ENCODE measurements at regions of chr6 and their contacts with region 1.

Region 1: GRCh38 chr6:2921520-2922115 is 18.5 kb upstream of the SERPINB9 start:
- DNase-seq: no peak
- ATAC-seq: no peak
- H3K4me3 ChIP-seq: no peak overlapping the region
- H3K27ac ChIP-seq: no peak overlapping the region
- H3K4me1 ChIP-seq: peaks cover 0 to 5% of the 10 kb centered on the region in 2 donors
- H3K27me3 ChIP-seq: no peaks in the 10 kb centered on the region
- CTCF ChIP-seq: no peak
- POLR2A ChIP-seq: no peak

Region 2: GRCh38 chr6:2783188-2783963 is 138.2 kb before region 1 on chr6:
- in situ Hi-C with region 1: loop called in 1 of 4 experiments (anchors 10 kb)
- intact Hi-C with region 1: no loop called
- DNase-seq: no peak
- ATAC-seq: no peak
- H3K4me3 ChIP-seq: no peak overlapping the region
- H3K27ac ChIP-seq: no peak overlapping the region
- H3K4me1 ChIP-seq: peaks cover 18 to 24% of the 10 kb centered on the region in 2 donors
- H3K27me3 ChIP-seq: no peaks in the 10 kb centered on the region
- CTCF ChIP-seq: no peak
- POLR2A ChIP-seq: no peak

Region 3: GRCh38 chr6:3194535-3195419 is 273.2 kb after region 1 on chr6:
- in situ Hi-C with region 1: no loop called
- intact Hi-C with region 1: no loop called
- DNase-seq: no peak
- ATAC-seq: no peak
- H3K4me3 ChIP-seq: no peak overlapping the region
- H3K27ac ChIP-seq: peak overlapping the region in 1 of 4 donors; percentile 54
- H3K4me1 ChIP-seq: no peaks in the 10 kb centered on the region
- H3K27me3 ChIP-seq: no peaks in the 10 kb centered on the region
- CTCF ChIP-seq: no peak
- POLR2A ChIP-seq: no peak